ENCODE measurements at regions of chr15 and their contacts with region 1.

Region 1: GRCh38 chr15:99788183-99788582 is 54.9 kb upstream of the LYSMD4 start:
- DNase-seq: no peak
- ATAC-seq: no peak
- H3K4me3 ChIP-seq: no peak overlapping the region
- H3K27ac ChIP-seq: no peak overlapping the region
- H3K4me1 ChIP-seq: no peaks in the 10 kb centered on the region
- H3K27me3 ChIP-seq: no peaks in the 10 kb centered on the region
- CTCF ChIP-seq: no peak
- EP300 ChIP-seq: no peak
- POLR2A ChIP-seq: no peak
- RAD21 ChIP-seq: no peak

Region 2: DNA sequence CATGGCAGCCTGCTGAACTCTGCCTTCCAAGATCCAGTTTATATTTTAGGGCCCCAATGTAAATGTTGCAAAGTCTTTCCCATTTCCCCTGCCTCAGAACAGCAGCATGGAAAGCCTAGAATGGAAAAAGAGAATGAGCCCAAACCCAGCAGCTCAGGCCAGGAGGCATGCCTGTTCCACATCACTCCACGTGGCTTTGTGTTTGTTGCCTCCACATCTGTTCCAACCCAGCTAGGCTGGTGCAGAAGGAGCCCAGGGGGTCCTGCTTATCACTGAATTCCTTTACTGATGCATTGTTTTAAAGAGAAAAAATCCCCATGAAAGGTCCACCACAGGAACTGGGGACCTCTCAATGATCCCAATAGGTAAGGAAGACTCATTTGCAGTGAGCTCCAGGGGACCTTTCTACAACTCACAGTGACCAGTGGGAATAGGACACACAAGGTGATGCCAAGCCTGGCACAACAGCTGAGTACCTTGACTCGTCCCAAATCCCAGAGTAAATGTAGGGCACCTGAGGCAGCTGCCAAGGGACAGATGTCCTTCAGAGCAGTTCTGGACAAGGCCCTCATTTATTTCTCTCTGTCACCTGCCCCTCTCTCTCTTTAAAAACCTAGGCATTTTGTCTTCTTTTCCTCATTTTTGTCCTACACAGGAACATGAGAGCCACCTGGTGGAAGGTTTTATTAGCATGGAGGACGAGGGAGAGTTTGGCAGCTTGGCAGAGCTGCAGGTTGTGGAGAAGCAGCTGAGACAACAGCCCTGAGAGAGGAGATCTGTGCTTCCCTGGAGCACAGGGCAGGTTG is 595.3 kb after region 1 on chr15:
- CTCF ChIA-PET with region 1: no interaction called
- POLR2A ChIA-PET with region 1: no interaction called
- RAD21 ChIA-PET with region 1: no interaction called
- SMC1A ChIA-PET with region 1: no interaction called
- in situ Hi-C with region 1: no loop called
- intact Hi-C with region 1: no loop called
- DNase-seq: no peak
- ATAC-seq: no peak
- H3K4me3 ChIP-seq: no peak overlapping the region
- H3K27ac ChIP-seq: no peak overlapping the region
- H3K4me1 ChIP-seq: no peaks in the 10 kb centered on the region
- H3K27me3 ChIP-seq: no peaks in the 10 kb centered on the region
- CTCF ChIP-seq: peak in 2 of 3 experiments; percentile 20 to 31; a peak in 3 of 6 replicates
- EP300 ChIP-seq: no peak
- POLR2A ChIP-seq: no peak
- RAD21 ChIP-seq: peak; percentile 62

Region 3: DNA sequence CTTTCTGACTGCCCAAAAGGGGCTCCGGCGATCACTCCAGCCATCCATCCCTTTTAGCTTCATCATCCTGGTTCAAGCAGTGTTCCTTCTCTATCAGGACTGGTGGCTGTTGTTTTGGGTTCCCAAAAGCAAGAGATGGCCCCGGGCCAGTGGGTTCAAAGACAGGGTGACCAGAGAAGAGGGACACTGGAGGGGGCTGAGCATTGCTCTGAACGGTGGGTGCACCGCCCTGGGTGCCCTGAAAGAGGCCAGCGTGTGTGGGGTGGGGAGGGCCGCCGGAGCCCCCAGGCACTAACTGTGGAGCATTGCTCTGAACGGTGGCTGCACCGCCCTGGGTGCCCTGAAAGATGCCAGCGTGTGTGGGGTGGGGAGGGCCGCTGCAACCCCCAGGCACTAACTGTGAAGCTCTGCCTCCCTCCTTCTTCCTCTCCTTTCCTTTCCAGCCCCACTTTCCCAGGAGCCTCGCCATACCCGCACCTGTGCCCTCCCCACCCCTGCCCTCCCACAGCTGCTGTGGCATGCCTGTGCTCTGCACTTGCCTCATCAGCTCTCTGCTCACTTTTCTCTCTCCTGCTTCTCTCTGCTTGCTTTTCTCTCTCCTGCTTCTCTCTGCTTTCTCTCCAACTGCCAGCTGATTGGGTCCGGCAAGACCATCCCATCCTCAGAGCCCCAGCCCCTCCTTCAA is 1977.7 kb after region 1 on chr15:
- CTCF ChIA-PET with region 1: no interaction called
- POLR2A ChIA-PET with region 1: no interaction called
- RAD21 ChIA-PET with region 1: no interaction called
- SMC1A ChIA-PET with region 1: no interaction called
- in situ Hi-C with region 1: loop called (anchors 10 kb)
- intact Hi-C with region 1: no loop called
- DNase-seq: no peak
- ATAC-seq: no peak
- H3K4me3 ChIP-seq: no peak overlapping the region
- H3K27ac ChIP-seq: no peak overlapping the region
- H3K4me1 ChIP-seq: no peaks in the 10 kb centered on the region
- H3K27me3 ChIP-seq: no peaks in the 10 kb centered on the region
- CTCF ChIP-seq: no peak
- EP300 ChIP-seq: no peak
- POLR2A ChIP-seq: no peak
- RAD21 ChIP-seq: no peak

Measured in GM12878 (cell line).